Right cardiac atrium (tissue), 5 donors: ENCODE measurements at regions of chr1 and their contacts with region 1.

Region 1: DNA sequence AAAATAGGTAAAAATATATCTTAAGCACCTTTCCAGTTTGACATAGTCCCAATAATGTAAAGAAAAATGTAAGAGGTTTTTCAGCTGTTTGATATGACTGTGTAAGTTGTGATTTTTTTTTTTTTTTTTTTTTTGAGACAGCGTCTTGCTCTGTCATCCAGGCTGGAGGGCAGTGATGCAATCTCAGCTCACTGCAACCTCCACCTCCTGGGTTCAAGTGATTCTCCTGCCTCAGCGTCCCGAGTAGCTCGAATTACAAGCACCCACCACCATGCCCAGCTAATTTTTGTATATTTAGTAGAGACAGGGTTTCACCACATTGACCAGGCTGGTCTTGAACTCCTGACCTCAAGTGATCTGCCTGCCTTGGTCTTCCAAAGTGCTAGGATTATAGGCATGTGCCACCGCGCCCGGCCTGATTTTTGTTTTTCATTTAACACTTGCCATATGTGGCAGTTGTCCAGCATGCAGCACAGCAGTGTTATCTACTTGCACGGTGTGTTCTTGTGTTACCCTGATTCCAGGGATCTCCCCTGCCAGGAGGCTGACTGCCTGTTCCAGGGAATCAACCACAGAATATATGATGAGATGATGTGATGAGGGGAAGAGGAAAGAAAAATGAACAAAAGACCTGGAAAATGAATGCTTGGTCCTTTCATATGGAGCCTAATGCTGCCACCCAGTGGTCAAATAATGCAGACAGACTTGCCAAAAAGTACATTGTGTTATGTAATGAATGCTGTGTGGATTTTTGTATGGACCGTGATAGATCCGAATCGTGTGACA is 79.0 kb downstream of the RAVER2 start:
- DNase-seq: peak; percentile 45 to 68 (median 52)
- ATAC-seq: peak; percentile 58 to 70
- H3K4me3 ChIP-seq: no peak overlapping the region
- H3K27ac ChIP-seq: no peak overlapping the region
- H3K4me1 ChIP-seq: no peaks in the 10 kb centered on the region
- H3K27me3 ChIP-seq: no peaks in the 10 kb centered on the region

Region 2: GRCh38 chr1:64268653-64269557 is 555.0 kb before region 1 on chr1:
- intact Hi-C with region 1: loop called in 2 of 4 experiments (anchors 10 kb)
- DNase-seq: peak in 2 of 3 donors; percentile 59 to 65
- ATAC-seq: peak; percentile 72 to 77
- H3K4me3 ChIP-seq: no peak overlapping the region
- H3K27ac ChIP-seq: no peak overlapping the region
- H3K4me1 ChIP-seq: no peaks in the 10 kb centered on the region
- H3K27me3 ChIP-seq: no peaks in the 10 kb centered on the region

Region 3: GRCh38 chr1:64686828-64687724 is 136.8 kb before region 1 on chr1:
- intact Hi-C with region 1: loop called (anchors 2 to 5 kb)
- DNase-seq: no peak
- ATAC-seq: peak; percentile 62 to 85
- H3K4me3 ChIP-seq: no peak overlapping the region
- H3K27ac ChIP-seq: no peak overlapping the region
- H3K4me1 ChIP-seq: no peaks in the 10 kb centered on the region
- H3K27me3 ChIP-seq: no peaks in the 10 kb centered on the region

Region 4: GRCh38 chr1:64744492-64745180 is 79.2 kb before region 1 on chr1 and contains the start of gene RAVER2:
- intact Hi-C with region 1: loop called in 1 of 4 experiments (anchors 10 kb)
- DNase-seq: peak; percentile 79 to 91 (median 91)
- ATAC-seq: peak; percentile 92 to 93
- H3K4me3 ChIP-seq: peak within 1 kb of the TSS; percentile 90
- H3K27ac ChIP-seq: peak within 1 kb of the TSS; percentile 66
- H3K4me1 ChIP-seq: no peaks in the 10 kb centered on the region
- H3K27me3 ChIP-seq: no peaks in the 10 kb centered on the region
- total RNA-seq, gene RAVER2: 17.6 to 28.5 (median 25.4) TPM

Region 5: GRCh38 chr1:64898107-64898845 is 74.4 kb after region 1 on chr1:
- intact Hi-C with region 1: no loop called
- DNase-seq: peak; percentile 81 to 89 (median 89)
- ATAC-seq: peak; percentile 98 to 99
- H3K4me3 ChIP-seq: no peak overlapping the region
- H3K27ac ChIP-seq: peak overlapping the region; percentile 87
- H3K4me1 ChIP-seq: peaks cover 18% of the 10 kb centered on the region
- H3K27me3 ChIP-seq: no peaks in the 10 kb centered on the region

Region 6: GRCh38 chr1:64940025-64940424 is 116.1 kb after region 1 on chr1:
- intact Hi-C with region 1: no loop called
- DNase-seq: no peak
- ATAC-seq: no peak
- H3K4me3 ChIP-seq: no peak overlapping the region
- H3K27ac ChIP-seq: no peak overlapping the region
- H3K4me1 ChIP-seq: peaks cover 12% of the 10 kb centered on the region
- H3K27me3 ChIP-seq: no peaks in the 10 kb centered on the region